ENCODE measurements at regions of chr15 and their contacts with region 1.

Region 1: DNA sequence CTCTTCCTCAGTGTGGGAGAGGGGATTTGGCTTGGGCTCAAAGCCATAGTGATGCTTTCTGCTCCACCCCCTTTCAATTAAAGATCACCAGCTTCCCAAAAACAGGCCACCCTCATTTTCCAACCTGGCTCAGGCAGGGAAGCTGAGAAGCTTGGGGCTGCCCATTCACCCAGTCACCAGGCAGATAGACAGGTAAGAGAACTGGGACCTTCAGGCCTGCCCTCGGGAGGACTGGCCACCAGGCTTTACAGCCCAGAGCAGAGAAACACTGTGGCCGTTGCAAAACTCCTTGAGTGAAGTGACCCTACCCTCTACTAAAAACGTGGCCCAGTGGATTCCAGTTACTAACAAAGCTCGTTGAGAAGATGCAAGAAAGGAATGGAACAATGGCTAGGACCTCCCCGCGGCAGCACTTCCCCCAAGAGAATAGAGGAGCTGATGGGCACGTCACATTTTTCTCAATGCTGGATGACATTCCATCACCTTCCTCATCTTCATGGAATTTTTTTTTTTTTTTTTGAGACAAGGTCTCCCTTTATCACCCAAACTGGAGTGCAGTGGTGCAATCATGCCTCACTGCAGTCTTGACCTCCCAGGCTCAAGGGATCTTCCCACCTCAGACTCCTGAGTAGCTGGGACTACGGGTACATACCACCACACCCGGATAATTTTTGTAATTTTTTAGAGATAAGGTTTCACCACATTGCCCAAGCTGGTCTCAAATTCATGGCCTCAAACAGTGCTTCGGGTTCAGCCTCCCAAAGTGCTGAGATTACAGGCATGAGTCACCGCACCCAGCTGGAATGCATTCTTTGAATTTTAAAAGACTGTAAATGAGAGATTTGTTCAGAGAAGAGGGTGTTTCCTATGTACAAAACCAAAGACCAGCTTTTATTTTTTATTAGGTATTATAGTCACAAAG is 37.9 kb downstream of the LIPC start:
- DNase-seq: peak; percentile 86
- H3K4me3 Mint-ChIP-seq: peak overlapping the region; percentile 9
- H3K27ac Mint-ChIP-seq: peak overlapping the region; percentile 75
- H3K4me1 Mint-ChIP-seq: peaks cover 70% of the 10 kb centered on the region
- H3K27me3 Mint-ChIP-seq: no peaks in the 10 kb centered on the region
- CTCF ChIP-seq: no peak

Region 2: DNA sequence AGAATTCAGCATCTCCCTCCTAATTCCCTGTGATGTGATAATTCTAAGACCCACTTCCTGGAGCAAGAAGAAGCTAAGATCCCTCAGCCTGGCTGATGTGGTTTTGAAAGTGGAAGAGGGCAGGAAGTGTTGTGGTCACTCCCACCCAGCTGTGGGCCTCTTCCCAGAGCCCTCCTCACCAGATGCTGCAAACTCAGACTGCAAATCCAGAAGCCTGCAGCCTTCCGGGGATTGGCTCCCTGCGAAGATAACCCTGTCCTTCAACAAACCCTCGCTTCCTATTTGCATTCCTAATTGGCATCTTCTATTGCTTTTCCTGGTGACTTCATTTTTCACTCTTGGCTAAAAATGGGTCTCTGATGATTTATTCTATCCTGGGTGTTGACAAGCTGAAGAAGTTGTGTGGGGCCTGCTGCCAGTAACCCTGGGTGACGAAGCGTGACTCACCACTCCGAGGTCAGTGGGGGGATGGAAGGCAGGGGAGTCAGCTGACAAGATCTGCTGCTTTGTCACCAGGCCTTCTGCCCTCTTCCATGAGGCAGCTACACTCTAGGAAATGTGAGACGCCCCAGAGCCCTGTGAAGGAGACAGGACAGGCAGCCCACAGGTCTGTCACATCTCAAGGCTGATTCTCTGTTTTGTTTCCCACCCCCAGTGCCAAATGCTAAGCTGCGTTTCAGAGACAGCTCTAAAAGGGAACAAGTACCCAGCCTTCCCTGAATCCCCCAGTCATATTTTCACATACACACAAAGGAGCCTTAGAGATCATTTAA is 137.6 kb before region 1 on chr15:
- CTCF ChIA-PET with region 1: interaction called, 6 read pairs
- intact Hi-C with region 1: loop called (anchors 2 kb)
- DNase-seq: peak; percentile 98
- H3K4me3 Mint-ChIP-seq: peak overlapping the region; percentile 51
- H3K27ac Mint-ChIP-seq: peak overlapping the region; percentile 99
- H3K4me1 Mint-ChIP-seq: peaks cover 58% of the 10 kb centered on the region
- H3K27me3 Mint-ChIP-seq: no peaks in the 10 kb centered on the region
- CTCF ChIP-seq: no peak

Region 3: GRCh38 chr15:58521293-58521991 is 51.7 kb after region 1 on chr15:
- CTCF ChIA-PET with region 1: interaction called, 4 read pairs
- intact Hi-C with region 1: loop called (anchors 2 kb)
- DNase-seq: peak; percentile 90
- H3K4me3 Mint-ChIP-seq: peak overlapping the region; percentile 57
- H3K27ac Mint-ChIP-seq: peak overlapping the region; percentile 96
- H3K4me1 Mint-ChIP-seq: peaks cover 62% of the 10 kb centered on the region
- H3K27me3 Mint-ChIP-seq: no peaks in the 10 kb centered on the region
- CTCF ChIP-seq: no peak

Region 4: DNA sequence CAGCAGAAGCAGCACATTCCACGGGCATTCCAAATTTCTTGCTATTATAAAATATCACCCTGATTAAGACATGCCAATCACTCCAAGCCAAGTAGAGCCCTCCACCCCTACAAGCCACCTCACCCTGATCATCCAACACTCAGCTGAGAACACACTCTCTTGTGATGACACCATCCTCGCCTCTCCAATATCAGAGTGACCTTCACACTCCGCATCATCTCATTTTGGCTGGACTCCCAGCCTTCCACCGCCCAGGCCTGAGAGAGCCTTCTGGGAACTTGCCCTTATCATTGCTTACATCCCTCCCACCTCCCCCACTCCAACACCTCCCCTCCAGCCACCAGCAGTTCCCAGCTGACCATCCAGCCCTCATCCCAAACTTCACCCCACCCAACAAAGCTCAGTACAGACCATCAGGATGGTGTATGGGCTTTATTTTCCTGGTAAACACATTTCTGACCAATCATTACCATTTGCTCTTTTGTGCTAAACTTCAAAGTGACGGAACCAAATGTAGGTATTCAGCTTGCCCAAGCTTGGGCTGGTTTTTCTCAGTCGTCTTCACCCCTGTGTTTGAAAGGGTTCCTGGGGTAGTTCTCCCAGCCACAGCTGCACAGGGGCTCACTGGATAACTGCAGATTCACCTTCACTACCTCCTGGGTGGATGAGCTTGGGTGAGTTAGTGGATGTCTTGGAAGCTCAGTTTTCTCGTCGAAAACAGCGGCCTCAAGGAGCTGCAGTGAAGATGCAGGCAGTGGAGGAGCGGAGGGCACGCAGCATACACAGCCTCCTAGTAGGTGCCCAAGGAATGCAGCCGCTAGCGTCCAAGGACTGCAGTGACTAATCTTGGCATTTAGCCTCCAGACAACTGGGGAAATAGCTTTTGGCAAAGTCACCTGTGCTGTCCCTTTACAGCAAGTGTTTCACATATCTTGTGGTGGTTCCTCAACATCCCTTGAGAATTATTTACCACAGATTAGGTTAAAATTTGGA is 77.2 kb after region 1 on chr15:
- CTCF ChIA-PET with region 1: interaction called, 5 read pairs
- intact Hi-C with region 1: loop called (anchors 5 kb)
- DNase-seq: peak; percentile 79
- H3K4me3 Mint-ChIP-seq: peak overlapping the region; percentile 29
- H3K27ac Mint-ChIP-seq: peak overlapping the region; percentile 69
- H3K4me1 Mint-ChIP-seq: peaks cover 34% of the 10 kb centered on the region
- H3K27me3 Mint-ChIP-seq: no peaks in the 10 kb centered on the region
- CTCF ChIP-seq: no peak

Measured in Calu3 (cell line).